Common myeloid progenitor, CD34-positive (primary cell): ENCODE measurements at regions of chr17 and their contacts with region 1.

Region 1: GRCh38 chr17:36111068-36111490 is 7.5 kb downstream of the CCL4 start:
- DNase-seq: peak in 2 of 3 donors; percentile 38 to 53
- H3K4me3 ChIP-seq: no peak overlapping the region
- H3K27ac ChIP-seq: no peak overlapping the region
- H3K4me1 ChIP-seq: peaks cover 0 to 3% (median 0%) of the 10 kb centered on the region in 4 experiments
- H3K27me3 ChIP-seq: peaks cover 0 to 4% (median 0%) of the 10 kb centered on the region in 5 experiments

Region 2: GRCh38 chr17:36127199-36127893 is 16.3 kb after region 1 on chr17:
- CTCF ChIA-PET with region 1: interaction called, 13 read pairs
- POLR2A ChIA-PET with region 1: interaction called, 3 read pairs
- DNase-seq: no peak
- H3K4me3 ChIP-seq: no peak overlapping the region
- H3K27ac ChIP-seq: no peak overlapping the region
- H3K4me1 ChIP-seq: peaks cover 0 to 5% (median 2%) of the 10 kb centered on the region in 4 experiments
- H3K27me3 ChIP-seq: no peaks in the 10 kb centered on the region

Region 3: GRCh38 chr17:36184023-36184765 is 73.1 kb after region 1 on chr17:
- CTCF ChIA-PET with region 1: interaction called, 11 read pairs
- POLR2A ChIA-PET with region 1: interaction called, 3 read pairs
- DNase-seq: peak in 1 of 3 donors; percentile 21
- H3K4me3 ChIP-seq: peak overlapping the region in 5 of 7 experiments; percentile 41 to 94 (median 60)
- H3K27ac ChIP-seq: no peak overlapping the region
- H3K4me1 ChIP-seq: peaks cover 27 to 65% (median 40%) of the 10 kb centered on the region in 4 experiments
- H3K27me3 ChIP-seq: peaks cover 0 to 26% (median 0%) of the 10 kb centered on the region in 5 experiments